Esophagus squamous epithelium (tissue), 5 donors: ENCODE measurements at regions of chr13 and their contacts with region 1.

Region 1: GRCh38 chr13:75549262-75550158 is at the start of gene UCHL3:
- DNase-seq: peak; percentile 64
- H3K4me3 ChIP-seq: peak within 1 kb of the TSS; percentile 85 to 89 (median 86)
- H3K27ac ChIP-seq: peak within 1 kb of the TSS; percentile 87 to 90 (median 89)
- H3K4me1 ChIP-seq: peaks cover 0 to 37% (median 15%) of the 10 kb centered on the region in 3 donors
- H3K27me3 ChIP-seq: no peaks in the 10 kb centered on the region
- CTCF ChIP-seq: peak; percentile 75 to 96 (median 91)
- POLR2A ChIP-seq: peak in 2 of 4 donors; percentile 50 to 69
- total RNA-seq, gene UCHL3: 39.9 to 78.2 (median 54.2) TPM

Region 2: DNA sequence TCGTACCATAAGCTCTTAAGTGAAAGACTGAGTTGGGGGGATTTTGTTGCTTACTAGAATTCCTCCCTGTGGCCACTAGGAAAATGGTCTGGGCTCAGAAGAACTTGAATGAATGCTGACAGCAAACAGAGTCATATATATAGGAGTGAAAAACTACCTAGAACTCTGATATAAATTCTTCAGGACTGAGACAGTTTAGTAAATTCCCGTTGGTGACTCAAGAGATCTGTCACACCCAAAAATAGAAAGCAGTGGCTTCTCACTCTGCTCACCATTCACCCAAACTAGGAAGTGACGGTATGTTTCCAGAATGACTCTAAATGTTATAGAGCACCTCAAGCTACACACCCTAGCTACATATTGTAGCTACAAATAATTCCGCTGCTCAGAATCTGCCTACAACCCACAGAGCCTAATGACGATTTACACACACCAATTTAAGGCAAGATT is 183.8 kb before region 1 on chr13:
- intact Hi-C with region 1: loop called (anchors 10 kb)
- DNase-seq: no peak
- H3K4me3 ChIP-seq: peak overlapping the region in 1 of 4 donors; percentile 2
- H3K27ac ChIP-seq: peak overlapping the region in 2 of 4 donors; percentile 2 to 32
- H3K4me1 ChIP-seq: peaks cover 0 to 54% (median 24%) of the 10 kb centered on the region in 3 donors
- H3K27me3 ChIP-seq: no peaks in the 10 kb centered on the region
- CTCF ChIP-seq: peak in 1 of 6 experiments; percentile 17
- POLR2A ChIP-seq: no peak

Region 3: GRCh38 chr13:75482070-75482819 is 67.3 kb before region 1 on chr13 and contains the start of gene TBC1D4:
- intact Hi-C with region 1: loop called (anchors 5 kb)
- DNase-seq: peak; percentile 22
- H3K4me3 ChIP-seq: peak within 1 kb of the TSS; percentile 73 to 97 (median 86)
- H3K27ac ChIP-seq: peak within 1 kb of the TSS; percentile 79 to 85 (median 84)
- H3K4me1 ChIP-seq: peaks cover 0 to 43% (median 3%) of the 10 kb centered on the region in 3 donors
- H3K27me3 ChIP-seq: no peaks in the 10 kb centered on the region
- CTCF ChIP-seq: peak; percentile 69 to 82 (median 76)
- POLR2A ChIP-seq: no peak
- total RNA-seq, gene TBC1D4: 14.9 to 20.8 (median 16.6) TPM

Region 4: DNA sequence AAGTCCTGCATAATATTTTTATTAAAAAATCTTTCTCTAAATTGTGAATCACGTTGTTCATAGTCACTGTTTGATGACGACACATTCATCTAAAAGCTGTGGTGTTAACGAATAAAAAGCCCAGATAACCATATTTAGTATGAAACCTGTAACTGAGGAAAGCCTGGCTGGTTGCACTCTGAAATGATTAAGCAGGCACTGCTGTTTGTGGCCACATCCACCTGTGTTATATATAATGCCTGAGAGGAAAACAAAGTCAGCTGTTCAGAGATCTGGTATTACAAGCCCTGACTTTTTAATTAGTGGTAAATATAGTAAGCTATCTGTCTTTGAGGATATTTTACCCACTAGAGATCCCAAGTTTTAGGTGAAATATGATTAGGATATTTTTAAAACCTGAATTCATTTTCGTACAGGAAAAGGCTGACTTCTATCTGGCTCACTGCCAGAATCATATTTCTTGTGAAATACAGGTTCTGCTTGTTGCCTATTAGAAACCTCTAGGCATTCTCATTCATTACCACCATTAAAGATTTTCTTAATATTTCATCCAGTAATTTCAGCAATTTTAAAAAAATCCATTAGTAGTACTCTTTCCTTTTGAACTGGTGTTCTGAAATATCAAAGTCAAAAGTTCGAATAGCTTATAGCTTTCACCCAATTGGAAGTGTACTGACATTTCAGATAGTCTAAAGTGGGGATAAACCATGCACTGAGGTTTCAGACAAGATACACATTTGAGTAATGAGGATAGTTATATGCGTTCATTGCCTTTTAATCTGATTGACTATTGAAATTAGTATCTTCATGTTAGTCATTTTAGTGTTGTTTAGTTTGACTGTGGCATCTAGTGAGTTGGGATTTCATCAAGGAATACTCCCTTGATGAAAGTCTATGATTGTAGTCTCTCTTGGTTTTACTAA is 166.4 kb after region 1 on chr13:
- intact Hi-C with region 1: no loop called
- DNase-seq: no peak
- H3K4me3 ChIP-seq: no peak overlapping the region
- H3K27ac ChIP-seq: peak overlapping the region; percentile 57 to 81 (median 70)
- H3K4me1 ChIP-seq: peaks cover 0 to 17% (median 4%) of the 10 kb centered on the region in 3 donors
- H3K27me3 ChIP-seq: no peaks in the 10 kb centered on the region
- CTCF ChIP-seq: no peak
- POLR2A ChIP-seq: no peak